Cardiac septum (tissue), 1 donor: ENCODE measurements at regions of chr17 and their contacts with region 1.

Region 1: GRCh38 chr17:10226930-10227685 is 28.7 kb upstream of the GAS7 start:
- DNase-seq: peak; percentile 84

Region 2: DNA sequence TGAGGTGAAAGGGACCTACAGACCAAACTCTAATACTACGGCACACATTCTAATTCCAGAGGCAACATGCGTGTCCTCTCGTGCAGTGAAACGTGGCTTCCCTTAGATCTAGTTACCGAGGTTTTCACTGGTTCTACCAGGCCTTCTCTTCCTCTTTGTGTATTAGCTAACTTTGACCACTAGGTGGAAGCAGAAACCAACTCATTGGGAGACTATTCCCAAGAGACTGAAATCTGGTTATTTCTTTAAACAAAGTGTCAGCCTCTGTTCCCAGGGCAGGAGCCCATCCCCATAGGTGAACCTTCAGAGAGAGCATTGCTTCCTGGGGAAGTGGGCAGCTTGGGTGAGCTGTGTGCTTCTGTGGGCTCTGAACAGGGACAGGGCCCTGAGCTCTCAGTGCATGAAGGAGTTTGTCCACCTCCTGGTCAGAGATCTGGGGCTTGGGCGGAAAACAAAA is 302.3 kb before region 1 on chr17:
- intact Hi-C with region 1: loop called (anchors 5 kb)
- DNase-seq: no peak

Region 3: DNA sequence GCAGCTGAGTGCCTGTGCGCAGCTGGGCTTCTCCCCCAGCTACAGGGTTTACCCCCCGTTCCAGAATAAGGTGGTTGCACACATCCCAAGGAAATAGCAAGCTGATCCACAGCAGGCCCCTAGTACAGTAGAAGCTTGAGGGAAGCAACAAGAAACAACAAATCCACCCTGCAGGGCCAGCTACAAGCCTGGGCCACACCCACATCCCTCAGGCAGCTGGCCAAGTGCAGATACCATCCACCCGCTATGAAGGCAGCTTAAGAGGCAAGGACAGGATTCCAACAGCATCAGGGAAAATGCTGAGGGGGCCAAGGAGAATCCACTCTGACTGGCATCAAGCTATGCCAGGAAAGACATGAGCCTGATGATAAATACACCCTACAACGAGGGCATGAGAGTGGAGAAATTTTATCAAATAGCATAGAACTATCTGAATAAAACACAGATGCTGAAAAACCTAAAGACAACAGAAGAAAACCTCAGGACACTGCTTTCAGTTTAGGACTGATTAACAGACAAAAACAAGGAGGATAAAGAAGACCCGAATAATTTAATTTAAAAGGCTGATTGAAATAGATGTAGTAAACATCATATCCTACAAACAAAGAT is 255.0 kb before region 1 on chr17:
- intact Hi-C with region 1: loop called (anchors 5 kb)
- DNase-seq: peak; percentile 78